Naive thymus-derived CD4-positive, alpha-beta T cell (primary cell): ENCODE measurements at regions of chr6 and their contacts with region 1.

Region 1: DNA sequence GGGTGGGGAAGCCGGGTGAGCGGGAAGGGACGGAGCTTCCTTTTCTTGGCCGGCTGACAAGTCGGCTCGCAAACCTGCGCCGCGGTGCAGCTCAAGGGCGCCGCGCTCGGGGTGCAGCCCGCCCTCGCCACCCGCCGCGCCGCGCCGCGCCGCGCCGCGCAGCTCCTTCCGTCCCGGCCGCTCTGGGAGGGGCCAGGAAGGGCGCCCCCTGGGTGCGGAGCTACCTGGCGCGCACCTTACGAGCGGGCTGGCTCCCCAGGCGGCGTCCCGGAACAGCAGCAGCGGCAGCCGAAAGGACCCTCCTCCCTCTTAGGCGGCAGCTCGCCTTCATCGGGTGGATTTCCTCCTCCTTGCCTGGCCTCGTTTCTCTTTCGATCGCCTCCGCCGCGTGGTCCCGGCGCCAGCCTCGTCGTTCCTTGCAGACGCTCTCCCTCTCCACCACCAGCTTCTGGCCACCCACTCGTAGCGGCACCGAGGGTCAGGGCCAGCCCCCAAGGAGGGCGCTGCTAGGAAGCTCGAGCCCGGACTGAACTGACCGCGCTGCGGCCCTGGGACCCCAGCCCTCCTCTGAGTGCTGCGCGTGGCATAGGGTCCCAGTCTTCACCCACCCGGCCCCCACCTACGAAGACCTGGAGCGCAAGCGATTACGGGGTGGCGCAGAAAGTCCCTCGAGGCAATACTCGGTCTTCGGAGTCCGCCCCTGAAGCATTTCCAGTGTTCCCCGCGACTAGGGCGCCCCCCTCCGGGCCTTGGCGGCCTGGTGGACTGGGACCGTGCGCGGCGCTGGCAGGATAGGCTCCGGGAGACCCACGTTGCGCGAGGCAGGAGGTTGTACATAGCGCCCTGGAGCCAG is at the start of gene MAP3K5:
- DNase-seq: peak; percentile 89 to 96 (median 94)
- ATAC-seq: peak; percentile 87
- H3K4me3 ChIP-seq: peak within 1 kb of the TSS; percentile 100
- H3K4me3 Mint-ChIP-seq: peak within 1 kb of the TSS; percentile 90 to 97 (median 94)
- H3K27ac ChIP-seq: peak within 1 kb of the TSS; percentile 97
- H3K27ac Mint-ChIP-seq: peak within 1 kb of the TSS; percentile 92 to 99 (median 95)
- H3K4me1 ChIP-seq: peaks cover 13 to 18% of the 10 kb centered on the region in 2 donors
- H3K4me1 Mint-ChIP-seq: peaks cover 19 to 40% (median 35%) of the 10 kb centered on the region in 7 donors
- H3K27me3 ChIP-seq: no peaks in the 10 kb centered on the region
- H3K27me3 Mint-ChIP-seq: peaks cover 0 to 3% (median 0%) of the 10 kb centered on the region in 5 donors
- total RNA-seq, gene MAP3K5: 12.9 to 32.5 (median 14.0) TPM

Region 2: GRCh38 chr6:135743476-135743875 is 1049.2 kb before region 1 on chr6:
- CTCF ChIA-PET with region 1: no interaction called
- POLR2A ChIA-PET with region 1: no interaction called
- intact Hi-C with region 1: no loop called
- DNase-seq: no peak
- ATAC-seq: no peak
- H3K4me3 ChIP-seq: no peak overlapping the region
- H3K4me3 Mint-ChIP-seq: no peak overlapping the region
- H3K27ac ChIP-seq: no peak overlapping the region
- H3K27ac Mint-ChIP-seq: peak overlapping the region in 1 of 9 donors; percentile 13
- H3K4me1 ChIP-seq: no peaks in the 10 kb centered on the region
- H3K4me1 Mint-ChIP-seq: peaks cover 0 to 5% (median 0%) of the 10 kb centered on the region in 7 donors
- H3K27me3 ChIP-seq: no peaks in the 10 kb centered on the region
- H3K27me3 Mint-ChIP-seq: peaks cover 0 to 4% (median 0%) of the 10 kb centered on the region in 5 donors

Region 3: GRCh38 chr6:136317021-136317694 is 475.5 kb before region 1 on chr6:
- CTCF ChIA-PET with region 1: no interaction called
- POLR2A ChIA-PET with region 1: no interaction called
- intact Hi-C with region 1: loop called in 1 of 2 experiments (anchors 1 kb)
- DNase-seq: peak; percentile 25 to 77 (median 66)
- ATAC-seq: peak; percentile 91
- H3K4me3 ChIP-seq: no peak overlapping the region
- H3K4me3 Mint-ChIP-seq: no peak overlapping the region
- H3K27ac ChIP-seq: no peak overlapping the region
- H3K27ac Mint-ChIP-seq: peak overlapping the region in 1 of 9 donors; percentile 19
- H3K4me1 ChIP-seq: no peaks in the 10 kb centered on the region
- H3K4me1 Mint-ChIP-seq: peaks cover 0 to 5% (median 0%) of the 10 kb centered on the region in 7 donors
- H3K27me3 ChIP-seq: no peaks in the 10 kb centered on the region
- H3K27me3 Mint-ChIP-seq: peaks cover 0 to 19% (median 0%) of the 10 kb centered on the region in 5 donors

Region 4: GRCh38 chr6:136582711-136583471 is 209.7 kb before region 1 on chr6:
- CTCF ChIA-PET with region 1: interaction called, 4 read pairs
- POLR2A ChIA-PET with region 1: no interaction called
- intact Hi-C with region 1: loop called (anchors 1 kb)
- DNase-seq: no peak
- ATAC-seq: peak; percentile 72
- H3K4me3 ChIP-seq: no peak overlapping the region
- H3K4me3 Mint-ChIP-seq: no peak overlapping the region
- H3K27ac ChIP-seq: no peak overlapping the region
- H3K27ac Mint-ChIP-seq: no peak overlapping the region
- H3K4me1 ChIP-seq: no peaks in the 10 kb centered on the region
- H3K4me1 Mint-ChIP-seq: peaks cover 0 to 2% (median 0%) of the 10 kb centered on the region in 7 donors
- H3K27me3 ChIP-seq: no peaks in the 10 kb centered on the region
- H3K27me3 Mint-ChIP-seq: no peaks in the 10 kb centered on the region

Region 5: DNA sequence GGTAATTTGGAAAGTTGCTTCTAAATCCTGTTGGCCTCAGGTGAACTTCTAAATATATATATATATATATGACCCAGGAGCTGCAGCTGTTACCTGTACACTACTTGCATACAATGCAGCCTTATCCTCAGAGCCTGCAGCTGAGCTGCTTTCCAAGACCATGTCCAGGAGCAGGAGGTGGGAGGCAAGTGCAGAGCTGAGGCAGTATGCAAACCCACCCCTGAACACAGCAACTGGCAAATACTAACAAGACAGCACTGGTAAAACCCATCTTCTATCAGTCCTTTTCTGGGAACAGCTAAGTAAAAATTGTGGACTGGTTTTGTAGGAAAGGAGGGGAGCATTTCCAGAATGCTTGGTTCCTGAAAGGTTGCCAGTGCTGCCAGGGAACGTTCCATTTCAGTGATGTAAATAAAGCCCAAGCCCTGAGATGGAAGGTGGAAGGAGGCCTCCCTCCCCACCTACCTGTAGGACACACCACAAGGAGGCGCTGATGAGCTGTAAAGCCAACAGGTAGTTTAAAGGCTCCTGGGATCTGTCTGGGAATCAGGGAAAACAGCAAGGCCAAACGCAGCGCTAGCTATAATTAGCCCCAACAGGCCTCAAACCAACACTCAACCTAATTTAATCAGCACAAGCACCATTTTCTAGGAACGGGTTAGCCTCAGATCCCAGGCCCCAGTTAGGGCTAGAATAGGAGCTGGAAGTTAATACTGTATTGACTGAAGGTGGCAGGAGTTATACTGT is 148.6 kb before region 1 on chr6:
- CTCF ChIA-PET with region 1: interaction called, 274 read pairs
- POLR2A ChIA-PET with region 1: interaction called, 79 read pairs
- intact Hi-C with region 1: loop called (anchors 1 kb)
- DNase-seq: peak; percentile 47 to 77 (median 69)
- ATAC-seq: peak; percentile 84
- H3K4me3 ChIP-seq: no peak overlapping the region
- H3K4me3 Mint-ChIP-seq: no peak overlapping the region
- H3K27ac ChIP-seq: no peak overlapping the region
- H3K27ac Mint-ChIP-seq: peak overlapping the region in 3 of 9 donors; percentile 10 to 53 (median 31)
- H3K4me1 ChIP-seq: peaks cover 0 to 13% of the 10 kb centered on the region in 2 donors
- H3K4me1 Mint-ChIP-seq: peaks cover 0 to 8% (median 0%) of the 10 kb centered on the region in 7 donors
- H3K27me3 ChIP-seq: no peaks in the 10 kb centered on the region
- H3K27me3 Mint-ChIP-seq: no peaks in the 10 kb centered on the region

Region 6: GRCh38 chr6:136737871-136738691 is 54.6 kb before region 1 on chr6:
- CTCF ChIA-PET with region 1: interaction called, 55 read pairs
- POLR2A ChIA-PET with region 1: interaction called, 20 read pairs
- intact Hi-C with region 1: loop called in 1 of 2 experiments (anchors 1 kb)
- DNase-seq: no peak
- ATAC-seq: no peak
- H3K4me3 ChIP-seq: no peak overlapping the region
- H3K4me3 Mint-ChIP-seq: no peak overlapping the region
- H3K27ac ChIP-seq: no peak overlapping the region
- H3K27ac Mint-ChIP-seq: peak overlapping the region in 1 of 9 donors; percentile 19
- H3K4me1 ChIP-seq: peaks cover 0 to 6% of the 10 kb centered on the region in 2 donors
- H3K4me1 Mint-ChIP-seq: peaks cover 13 to 43% (median 21%) of the 10 kb centered on the region in 7 donors
- H3K27me3 ChIP-seq: no peaks in the 10 kb centered on the region
- H3K27me3 Mint-ChIP-seq: no peaks in the 10 kb centered on the region

Region 7: DNA sequence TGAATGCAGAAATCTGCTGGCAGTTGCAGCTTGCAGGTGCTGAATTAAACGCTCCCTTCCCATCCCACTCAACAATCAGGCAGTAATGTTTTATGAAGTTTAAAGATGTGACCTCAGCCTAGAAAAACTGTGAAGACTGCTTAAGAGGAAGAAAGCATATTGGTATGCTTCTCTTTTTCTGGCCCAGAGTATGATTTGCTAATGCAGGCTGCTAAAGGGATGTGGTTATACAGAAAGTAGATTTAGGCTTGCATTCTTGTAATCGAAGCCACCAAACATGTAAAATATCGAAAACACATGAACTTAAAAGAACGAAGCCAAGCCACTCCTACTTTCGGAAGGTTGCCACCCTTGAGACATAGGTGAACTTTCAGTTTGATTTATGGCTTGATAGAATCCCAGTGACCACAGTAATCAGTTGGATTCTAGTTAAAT is 41.1 kb before region 1 on chr6:
- CTCF ChIA-PET with region 1: interaction called, 21 read pairs
- POLR2A ChIA-PET with region 1: interaction called, 22 read pairs
- intact Hi-C with region 1: loop called (anchors 1 kb)
- DNase-seq: peak in 7 of 9 donors; percentile 28 to 78 (median 68)
- ATAC-seq: peak; percentile 71
- H3K4me3 ChIP-seq: peak overlapping the region; percentile 37
- H3K4me3 Mint-ChIP-seq: peak overlapping the region; percentile 22 to 87 (median 72)
- H3K27ac ChIP-seq: peak overlapping the region; percentile 60
- H3K27ac Mint-ChIP-seq: peak overlapping the region; percentile 78 to 98 (median 91)
- H3K4me1 ChIP-seq: peaks cover 37 to 51% of the 10 kb centered on the region in 2 donors
- H3K4me1 Mint-ChIP-seq: peaks cover 58 to 84% (median 65%) of the 10 kb centered on the region in 7 donors
- H3K27me3 ChIP-seq: no peaks in the 10 kb centered on the region
- H3K27me3 Mint-ChIP-seq: no peaks in the 10 kb centered on the region

Region 8: DNA sequence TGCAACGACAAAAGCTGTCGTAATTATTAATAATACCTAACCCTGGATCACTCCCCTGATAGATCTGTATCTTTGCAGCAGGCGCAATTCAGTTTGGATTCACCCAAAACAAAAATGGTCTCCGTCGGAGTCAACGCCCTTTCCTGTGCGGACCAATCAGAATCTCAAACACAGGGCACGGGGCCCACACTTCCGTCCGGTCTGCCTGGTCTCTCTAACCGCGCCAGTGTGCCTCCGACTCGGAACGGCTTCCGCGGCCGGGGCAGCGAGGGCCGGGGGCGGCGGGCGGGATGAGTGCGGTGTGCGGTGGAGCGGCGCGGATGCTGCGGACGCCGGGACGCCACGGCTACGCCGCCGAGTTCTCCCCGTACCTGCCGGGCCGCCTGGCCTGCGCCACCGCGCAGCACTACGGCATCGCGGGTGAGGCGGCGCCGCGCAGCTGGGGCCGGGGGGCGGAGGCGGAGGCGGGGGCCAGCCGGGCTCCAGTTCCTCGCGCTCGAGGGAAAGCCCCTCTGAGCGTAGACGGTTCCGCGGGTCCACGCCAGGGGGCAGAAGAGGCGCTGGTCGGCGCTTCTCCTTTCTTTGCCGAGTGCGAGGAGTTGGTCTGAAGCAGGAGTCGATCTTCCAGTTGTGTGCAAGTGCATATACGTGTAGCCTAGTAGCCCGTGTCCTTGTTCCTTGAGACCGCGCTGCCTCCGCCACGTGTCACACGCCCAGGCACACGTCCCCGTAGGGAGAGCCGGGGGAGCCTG is 29.9 kb after region 1 on chr6 and contains the start of gene PEX7:
- CTCF ChIA-PET with region 1: interaction called, 12 read pairs
- POLR2A ChIA-PET with region 1: interaction called, 15 read pairs
- intact Hi-C with region 1: loop called (anchors 1 kb)
- DNase-seq: peak; percentile 83 to 94 (median 92)
- ATAC-seq: peak; percentile 95
- H3K4me3 ChIP-seq: peak within 1 kb of the TSS; percentile 96
- H3K4me3 Mint-ChIP-seq: peak within 1 kb of the TSS; percentile 87 to 99 (median 94)
- H3K27ac ChIP-seq: peak within 1 kb of the TSS; percentile 91
- H3K27ac Mint-ChIP-seq: peak within 1 kb of the TSS; percentile 91 to 99 (median 96)
- H3K4me1 ChIP-seq: peaks cover 6 to 13% of the 10 kb centered on the region in 2 donors
- H3K4me1 Mint-ChIP-seq: peaks cover 13 to 50% (median 40%) of the 10 kb centered on the region in 7 donors
- H3K27me3 ChIP-seq: peaks cover 0 to 3% of the 10 kb centered on the region in 2 donors
- H3K27me3 Mint-ChIP-seq: peaks cover 3 to 10% (median 8%) of the 10 kb centered on the region in 5 donors
- total RNA-seq, gene PEX7: 4.0 to 6.2 (median 5.4) TPM

Region 9: DNA sequence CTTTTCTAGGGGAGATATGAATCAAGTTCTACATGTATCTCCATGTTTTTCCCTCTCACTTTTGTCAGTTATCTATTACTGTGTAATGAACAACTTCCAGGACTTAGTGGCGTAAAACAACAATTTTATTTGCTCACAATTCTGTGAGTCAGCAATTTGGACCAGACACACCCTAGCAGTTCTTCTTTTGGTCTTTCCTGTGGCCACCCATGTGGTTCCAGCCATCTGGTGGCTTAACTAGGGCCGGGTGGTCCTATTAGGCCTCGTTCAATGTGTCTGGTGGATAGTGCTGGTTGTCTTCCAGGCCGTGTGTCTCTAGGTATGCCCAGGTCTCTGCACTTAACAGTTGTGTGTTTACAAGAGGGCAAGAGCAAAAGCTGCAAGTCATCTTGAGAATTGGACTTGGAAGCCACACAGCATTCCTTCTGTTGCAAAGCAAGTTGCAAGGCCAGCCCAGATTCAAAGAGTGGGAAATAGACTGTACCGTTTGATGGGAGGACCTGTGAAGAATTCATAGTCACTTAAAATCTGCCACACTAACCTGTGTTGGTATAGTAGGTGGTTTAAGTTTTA is 108.7 kb after region 1 on chr6:
- CTCF ChIA-PET with region 1: no interaction called
- POLR2A ChIA-PET with region 1: no interaction called
- intact Hi-C with region 1: no loop called
- DNase-seq: no peak
- ATAC-seq: no peak
- H3K4me3 ChIP-seq: no peak overlapping the region
- H3K4me3 Mint-ChIP-seq: no peak overlapping the region
- H3K27ac ChIP-seq: no peak overlapping the region
- H3K27ac Mint-ChIP-seq: peak overlapping the region in 1 of 9 donors; percentile 12
- H3K4me1 ChIP-seq: no peaks in the 10 kb centered on the region
- H3K4me1 Mint-ChIP-seq: peaks cover 0 to 2% (median 0%) of the 10 kb centered on the region in 7 donors
- H3K27me3 ChIP-seq: no peaks in the 10 kb centered on the region
- H3K27me3 Mint-ChIP-seq: no peaks in the 10 kb centered on the region